H1 (cell line): ENCODE measurements at regions of chr15 and their contacts with region 1.

Region 1: DNA sequence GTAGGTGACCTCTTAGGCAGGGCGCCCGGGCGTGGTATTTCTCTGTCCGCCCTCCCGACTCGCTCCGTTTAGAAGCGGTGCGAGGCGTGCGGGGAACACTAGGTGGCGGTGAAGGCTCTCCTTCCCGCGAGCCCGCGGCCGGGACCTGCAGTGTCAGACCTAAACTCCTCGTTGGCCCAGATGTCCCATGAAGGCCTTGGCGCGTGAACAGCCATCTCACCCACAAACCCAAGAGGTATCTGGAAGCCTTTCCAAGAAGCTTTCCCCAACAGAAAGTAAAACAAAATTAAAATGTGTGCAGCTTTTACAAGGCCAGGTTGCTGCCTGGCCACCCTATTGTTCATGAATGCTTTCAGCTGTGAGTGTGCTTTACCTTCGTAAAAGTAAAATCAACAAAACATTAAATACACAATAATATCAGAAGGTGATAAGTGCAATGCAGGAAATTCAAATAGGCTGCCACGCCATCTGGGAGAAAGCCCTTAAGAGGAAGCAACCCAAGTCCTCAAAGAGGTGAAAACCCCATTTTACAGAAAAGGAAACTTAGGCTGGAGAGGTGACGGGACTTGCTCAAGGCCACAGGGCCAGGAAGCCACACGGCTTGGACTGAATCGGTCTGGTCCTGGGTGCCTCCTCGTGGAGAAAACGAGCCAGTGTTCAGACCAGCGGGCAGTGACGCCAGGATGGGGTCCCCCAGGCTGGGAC is 120.3 kb downstream of the ETFA start:
- DNase-seq: peak; percentile 61 to 91
- H3K4me3 ChIP-seq: no peak overlapping the region
- H3K27ac ChIP-seq: no peak overlapping the region
- H3K4me1 ChIP-seq: peaks cover 0 to 2% (median 0%) of the 10 kb centered on the region in 4 experiments; a peak in 2 of 7 replicates
- H3K27me3 ChIP-seq: peaks cover 0 to 9% (median 7%) of the 10 kb centered on the region in 4 experiments; a peak in 4 of 7 replicates
- CTCF ChIP-seq: peak; percentile 89 to 94 (median 93)
- EP300 ChIP-seq: no peak
- POLR2A ChIP-seq: no peak
- RAD21 ChIP-seq: peak; percentile 94 to 96

Region 2: DNA sequence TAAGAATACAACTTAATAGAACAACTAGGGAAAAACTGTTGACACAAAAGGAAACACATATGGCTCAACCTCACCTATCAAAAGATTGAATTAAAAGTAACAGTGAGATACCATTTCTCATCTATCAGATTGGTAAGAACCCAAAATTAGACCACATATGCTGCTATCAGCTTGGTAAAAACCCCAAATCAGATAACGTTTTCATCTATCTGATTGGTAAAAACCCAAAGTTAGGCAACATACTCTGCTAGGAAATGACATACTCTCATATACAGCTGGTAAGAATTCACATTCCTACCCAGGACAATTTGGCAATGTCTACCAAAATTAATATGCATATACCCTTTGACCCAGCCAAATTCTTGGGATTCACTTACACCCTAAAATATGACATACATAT is 205.0 kb before region 1 on chr15:
- CTCF ChIA-PET with region 1: no interaction called
- POLR2A ChIA-PET with region 1: no interaction called
- DNase-seq: no peak
- H3K4me3 ChIP-seq: no peak overlapping the region
- H3K27ac ChIP-seq: no peak overlapping the region
- H3K4me1 ChIP-seq: peaks cover 0 to 3% (median 0%) of the 10 kb centered on the region in 4 experiments; a peak in 1 of 7 replicates
- H3K27me3 ChIP-seq: no peaks in the 10 kb centered on the region
- CTCF ChIP-seq: no peak
- EP300 ChIP-seq: no peak
- POLR2A ChIP-seq: no peak
- RAD21 ChIP-seq: no peak

Region 3: DNA sequence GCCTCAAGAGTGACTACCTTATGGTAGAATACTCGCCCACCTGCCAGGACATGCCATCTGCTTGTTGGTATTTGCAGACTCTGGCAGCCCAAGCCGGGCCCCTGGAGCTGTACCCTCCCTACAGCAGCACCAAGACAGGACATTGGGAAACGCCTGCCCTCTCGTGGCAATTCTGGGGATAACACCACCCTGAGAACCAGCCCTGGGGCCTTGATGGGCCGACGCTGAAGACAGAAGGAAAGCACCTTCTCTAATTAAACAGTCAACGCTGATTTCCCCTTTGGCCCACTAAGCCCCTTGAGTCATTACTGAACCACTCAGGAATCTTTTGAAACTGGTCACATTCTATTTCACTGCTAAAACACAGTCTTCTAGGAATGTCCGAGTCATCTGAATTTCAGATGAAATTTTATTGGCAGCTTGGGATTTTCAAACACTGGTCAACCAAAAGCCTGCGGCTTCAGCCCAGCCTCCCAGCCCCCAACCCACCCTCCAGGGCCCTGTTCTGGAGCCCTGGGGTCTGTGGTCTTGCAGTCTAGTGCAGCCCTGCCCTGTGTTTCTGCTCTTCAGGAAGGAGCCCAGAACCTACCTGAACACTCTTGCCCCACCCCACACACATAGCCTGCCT is 39.9 kb before region 1 on chr15:
- CTCF ChIA-PET with region 1: interaction called, 17 read pairs
- POLR2A ChIA-PET with region 1: no interaction called
- DNase-seq: peak; percentile 85 to 96
- H3K4me3 ChIP-seq: peak overlapping the region in 3 of 4 experiments; percentile 8 to 25 (median 23); a peak in 1 of 8 replicates
- H3K27ac ChIP-seq: no peak overlapping the region
- H3K4me1 ChIP-seq: peaks cover 0 to 26% (median 21%) of the 10 kb centered on the region in 4 experiments; a peak in 6 of 7 replicates
- H3K27me3 ChIP-seq: no peaks in the 10 kb centered on the region
- CTCF ChIP-seq: peak; percentile 90 to 91 (median 91)
- EP300 ChIP-seq: no peak
- POLR2A ChIP-seq: no peak
- RAD21 ChIP-seq: peak; percentile 72 to 82

Region 4: GRCh38 chr15:76235186-76235826 is 44.3 kb after region 1 on chr15:
- CTCF ChIA-PET with region 1: interaction called, 14 read pairs
- POLR2A ChIA-PET with region 1: no interaction called
- DNase-seq: no peak
- H3K4me3 ChIP-seq: no peak overlapping the region
- H3K27ac ChIP-seq: no peak overlapping the region
- H3K4me1 ChIP-seq: peaks cover 0 to 8% (median 5%) of the 10 kb centered on the region in 4 experiments; a peak in 6 of 7 replicates
- H3K27me3 ChIP-seq: no peaks in the 10 kb centered on the region
- CTCF ChIP-seq: peak in 2 of 3 experiments; percentile 22 to 29; a peak in 2 of 4 replicates
- EP300 ChIP-seq: no peak
- POLR2A ChIP-seq: no peak
- RAD21 ChIP-seq: peak; percentile 56 to 59

Region 5: DNA sequence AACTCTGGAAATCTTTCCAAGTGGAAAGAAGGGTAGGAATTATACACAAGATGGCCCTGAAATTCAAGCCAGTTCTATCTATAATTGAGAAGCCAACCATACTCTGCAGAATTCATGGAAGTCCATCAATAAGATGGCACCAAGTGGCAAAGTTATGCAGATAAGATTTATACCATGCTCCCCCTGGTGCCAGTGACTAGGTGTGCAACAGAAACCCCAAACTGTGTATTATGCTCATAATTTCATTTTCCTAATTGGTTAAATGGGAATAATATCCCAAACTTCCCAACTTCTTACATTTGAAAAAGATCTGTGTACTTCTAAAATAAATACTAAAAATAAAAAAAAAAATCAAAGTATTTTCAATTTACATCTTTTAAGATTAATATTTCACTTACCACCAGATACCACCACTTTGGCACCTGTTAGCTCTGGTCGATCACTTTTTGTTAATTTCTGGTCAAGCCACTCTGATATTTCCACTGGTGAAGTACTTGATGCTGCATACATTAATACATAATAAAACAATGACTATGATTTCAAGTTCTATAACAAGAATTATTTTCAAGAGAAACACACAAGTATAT is 94.3 kb after region 1 on chr15:
- CTCF ChIA-PET with region 1: interaction called, 16 read pairs
- POLR2A ChIA-PET with region 1: no interaction called
- DNase-seq: no peak
- H3K4me3 ChIP-seq: no peak overlapping the region
- H3K27ac ChIP-seq: no peak overlapping the region
- H3K4me1 ChIP-seq: no peaks in the 10 kb centered on the region
- H3K27me3 ChIP-seq: no peaks in the 10 kb centered on the region
- CTCF ChIP-seq: peak in 2 of 3 experiments; percentile 4 to 10; a peak in 2 of 4 replicates
- EP300 ChIP-seq: no peak
- POLR2A ChIP-seq: no peak
- RAD21 ChIP-seq: 0 out of 4 replicates have a peak, but pooled peaks of 1 of the 2 experiments have one; percentile 3